AG04450 (cell line): ENCODE measurements at regions of chr18 and their contacts with region 1.

Region 1: GRCh38 chr18:48675352-48675761 is 136.5 kb downstream of the CTIF start:
- DNase-seq: peak; percentile 63
- H3K4me3 ChIP-seq: no peak overlapping the region
- H3K27ac ChIP-seq: peak overlapping the region; percentile 39
- H3K27me3 ChIP-seq: no peaks in the 10 kb centered on the region
- CTCF ChIP-seq: peak; percentile 93

Region 2: GRCh38 chr18:48727681-48728080 is 52.3 kb after region 1 on chr18:
- CTCF ChIA-PET with region 1: no interaction called
- POLR2A ChIA-PET with region 1: no interaction called
- DNase-seq: no peak
- H3K4me3 ChIP-seq: no peak overlapping the region
- H3K27ac ChIP-seq: no peak overlapping the region
- H3K27me3 ChIP-seq: no peaks in the 10 kb centered on the region
- CTCF ChIP-seq: no peak

Region 3: DNA sequence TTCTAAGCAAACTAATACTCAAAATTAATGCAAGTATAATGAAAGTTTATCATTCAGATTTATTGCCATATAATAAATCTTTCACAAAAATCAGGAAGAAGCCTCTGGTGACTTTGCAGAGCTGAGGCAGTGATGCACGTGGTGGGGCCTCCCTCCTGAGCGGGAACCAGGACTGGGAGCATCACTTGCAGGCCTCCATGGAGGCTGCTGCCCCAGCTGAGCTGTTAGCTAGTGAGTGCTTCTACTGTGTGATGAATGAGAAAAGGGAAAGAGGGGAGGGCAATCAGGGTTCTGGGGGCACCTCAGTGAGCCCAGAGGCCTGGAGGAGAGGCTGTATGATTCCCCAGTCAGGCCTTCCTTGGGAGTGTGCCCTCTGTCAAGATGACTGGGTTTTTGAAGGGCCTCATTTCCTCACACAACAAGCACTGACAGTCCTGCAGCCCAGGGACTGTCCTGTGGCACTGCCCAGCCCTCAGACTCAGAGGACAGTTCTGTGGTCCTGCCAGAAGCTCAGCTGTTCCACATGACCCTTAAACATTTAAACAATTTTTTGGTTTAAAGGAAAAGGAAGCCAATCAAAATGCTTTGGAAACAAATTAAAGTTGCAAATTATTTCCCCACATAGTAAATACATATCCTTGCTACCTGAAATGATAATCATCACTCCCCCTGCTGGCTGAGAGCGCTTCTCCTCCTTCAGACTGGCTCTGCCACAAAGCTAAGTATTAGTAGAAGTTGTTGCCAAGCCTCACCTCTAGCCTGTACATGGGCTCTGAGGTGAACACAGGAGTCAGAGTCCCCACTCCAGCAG is 366.3 kb after region 1 on chr18:
- CTCF ChIA-PET with region 1: interaction called, 26 read pairs
- POLR2A ChIA-PET with region 1: no interaction called
- DNase-seq: peak; percentile 29
- H3K4me3 ChIP-seq: no peak overlapping the region
- H3K27ac ChIP-seq: no peak overlapping the region
- H3K27me3 ChIP-seq: no peaks in the 10 kb centered on the region
- CTCF ChIP-seq: peak; percentile 77

Region 4: GRCh38 chr18:49238433-49239042 is 563.2 kb after region 1 on chr18:
- CTCF ChIA-PET with region 1: interaction called, 48 read pairs
- POLR2A ChIA-PET with region 1: no interaction called
- DNase-seq: no peak
- H3K4me3 ChIP-seq: no peak overlapping the region
- H3K27ac ChIP-seq: no peak overlapping the region
- H3K27me3 ChIP-seq: no peaks in the 10 kb centered on the region
- CTCF ChIP-seq: peak; percentile 64